Caco-2 (cell line): ENCODE measurements at regions of chr16 and their contacts with region 1.

Region 1: DNA sequence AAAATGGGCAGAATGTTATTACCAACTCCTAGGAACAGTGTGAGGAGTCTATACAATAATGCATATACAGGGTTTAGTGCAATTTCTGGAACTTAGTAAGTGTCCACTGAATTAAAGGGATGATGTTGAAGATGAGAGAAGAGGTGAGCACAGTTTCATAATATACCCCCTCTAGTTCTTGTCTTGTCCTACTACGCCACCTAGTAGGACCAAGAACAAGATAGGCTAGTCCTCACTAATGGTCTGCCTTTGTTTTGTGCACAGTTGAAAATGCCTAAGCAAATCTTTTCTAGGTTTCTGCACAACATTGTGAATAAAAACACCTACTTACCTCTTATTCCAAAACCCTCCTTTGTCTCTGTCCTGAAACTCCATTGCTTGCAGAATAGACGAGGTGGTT is 670.2 kb downstream of the CDH8 start:
- DNase-seq: peak in 1 of 2 experiments; percentile 5
- H3K4me3 ChIP-seq: no peak overlapping the region
- H3K4me3 Mint-ChIP-seq: no peak overlapping the region
- H3K27ac Mint-ChIP-seq: no peak overlapping the region
- H3K4me1 ChIP-seq: no peaks in the 10 kb centered on the region
- H3K4me1 Mint-ChIP-seq: no peaks in the 10 kb centered on the region
- H3K27me3 ChIP-seq: no peaks in the 10 kb centered on the region
- H3K27me3 Mint-ChIP-seq: peaks cover 8% of the 10 kb centered on the region
- CTCF ChIP-seq: no peak

Region 2: DNA sequence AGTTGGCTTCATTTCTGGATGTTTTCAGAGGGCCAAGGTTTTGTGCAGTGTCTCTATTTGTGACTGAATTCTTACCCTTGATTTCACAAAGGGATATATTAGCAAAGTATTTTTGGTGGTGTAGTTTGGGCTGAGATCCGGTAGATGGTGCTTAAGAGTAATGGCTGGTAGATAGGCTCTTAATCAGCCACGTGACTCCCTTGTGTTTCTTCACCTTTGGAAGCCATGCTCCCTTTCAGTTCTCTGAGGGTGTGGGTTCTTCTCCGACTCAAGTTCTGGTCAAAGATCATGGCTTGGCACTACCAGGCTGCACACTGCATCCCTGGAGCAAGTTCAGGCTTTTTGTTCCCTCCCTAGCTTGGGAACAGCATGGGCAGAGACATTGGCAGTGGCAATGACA is 217.1 kb before region 1 on chr16:
- CTCF ChIA-PET with region 1: no interaction called
- POLR2A ChIA-PET with region 1: no interaction called
- intact Hi-C with region 1: loop called (anchors 1 kb)
- DNase-seq: peak in 1 of 2 experiments; percentile 8
- H3K4me3 ChIP-seq: no peak overlapping the region
- H3K4me3 Mint-ChIP-seq: no peak overlapping the region
- H3K27ac Mint-ChIP-seq: no peak overlapping the region
- H3K4me1 ChIP-seq: no peaks in the 10 kb centered on the region
- H3K4me1 Mint-ChIP-seq: no peaks in the 10 kb centered on the region
- H3K27me3 ChIP-seq: no peaks in the 10 kb centered on the region
- H3K27me3 Mint-ChIP-seq: no peaks in the 10 kb centered on the region
- CTCF ChIP-seq: peak; percentile 14 to 33